ENCODE measurements at regions of chr5 and their contacts with region 1.

Region 1: GRCh38 chr5:173234129-173234790 is 746 bp downstream of the NKX2-5 start:
- DNase-seq: no peak
- ATAC-seq: peak; percentile 3; the same call in 1 of the 2 replicates
- H3K4me3 Mint-ChIP-seq: peak overlapping the region; percentile 56
- H3K27ac Mint-ChIP-seq: no peak overlapping the region
- H3K4me1 Mint-ChIP-seq: peaks cover 60% of the 10 kb centered on the region
- H3K27me3 Mint-ChIP-seq: peaks cover 100% of the 10 kb centered on the region
- CTCF ChIP-seq: no peak

Region 2: GRCh38 chr5:173051746-173052145 is 182.5 kb before region 1 on chr5:
- CTCF ChIA-PET with region 1: no interaction called
- POLR2A ChIA-PET with region 1: no interaction called
- DNase-seq: no peak
- ATAC-seq: no peak
- H3K4me3 Mint-ChIP-seq: no peak overlapping the region
- H3K27ac Mint-ChIP-seq: no peak overlapping the region
- H3K4me1 Mint-ChIP-seq: peaks cover 14% of the 10 kb centered on the region
- H3K27me3 Mint-ChIP-seq: peaks cover 9% of the 10 kb centered on the region
- CTCF ChIP-seq: no peak

Region 3: DNA sequence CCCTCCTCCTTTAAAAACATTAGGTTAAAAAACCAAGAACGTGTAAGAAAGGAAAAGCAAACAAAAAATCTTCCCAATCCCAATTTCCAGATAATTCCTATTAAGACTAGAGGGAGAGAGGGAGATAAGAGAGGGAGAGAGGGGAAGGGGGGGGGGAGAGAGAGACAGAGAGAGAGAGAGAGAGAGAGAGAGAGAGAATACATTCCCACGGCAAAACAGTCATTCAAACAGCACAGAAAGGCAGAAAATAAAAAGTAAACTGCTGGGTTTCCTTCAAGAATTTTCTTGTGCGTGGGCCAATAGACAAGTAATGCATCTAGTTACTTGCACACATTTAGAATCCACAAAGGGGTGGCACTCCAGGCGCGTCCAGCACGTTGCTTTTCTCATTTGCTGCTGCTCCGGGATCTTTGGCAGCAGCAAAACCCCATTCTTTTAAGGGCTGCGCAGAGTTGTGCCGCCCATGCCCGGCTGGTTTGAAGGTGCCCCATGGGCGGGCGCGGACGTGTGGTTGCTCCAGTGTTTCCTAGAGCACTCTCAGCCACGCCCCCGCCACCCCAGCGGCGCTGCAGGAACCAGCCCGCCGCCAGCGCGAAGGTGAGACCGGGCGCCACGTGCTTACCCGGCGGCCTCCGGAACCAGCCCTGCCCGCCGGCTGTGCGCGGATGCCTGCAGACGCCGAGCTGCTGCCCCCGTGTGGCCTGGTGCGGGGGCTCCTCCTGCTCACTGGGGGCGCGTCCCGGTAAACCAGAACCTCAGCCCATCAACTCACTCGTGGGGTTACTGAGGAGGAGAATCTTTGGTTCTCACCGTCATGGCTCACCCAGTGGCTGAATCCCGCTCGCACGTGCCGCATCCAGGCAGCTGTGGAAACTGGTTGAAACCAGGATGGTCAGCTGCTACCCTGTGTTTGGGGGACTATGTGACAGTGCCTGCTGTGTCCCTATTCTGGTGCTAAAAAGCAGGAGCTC is 49.3 kb after region 1 on chr5:
- CTCF ChIA-PET with region 1: interaction called, 14 read pairs
- POLR2A ChIA-PET with region 1: no interaction called
- DNase-seq: peak; percentile 87
- ATAC-seq: peak; percentile 88
- H3K4me3 Mint-ChIP-seq: peak overlapping the region; percentile 23; the same call in 1 of the 2 replicates
- H3K27ac Mint-ChIP-seq: no peak overlapping the region
- H3K4me1 Mint-ChIP-seq: peaks cover 10% of the 10 kb centered on the region
- H3K27me3 Mint-ChIP-seq: peaks cover 61% of the 10 kb centered on the region
- CTCF ChIP-seq: peak; percentile 58

Region 4: DNA sequence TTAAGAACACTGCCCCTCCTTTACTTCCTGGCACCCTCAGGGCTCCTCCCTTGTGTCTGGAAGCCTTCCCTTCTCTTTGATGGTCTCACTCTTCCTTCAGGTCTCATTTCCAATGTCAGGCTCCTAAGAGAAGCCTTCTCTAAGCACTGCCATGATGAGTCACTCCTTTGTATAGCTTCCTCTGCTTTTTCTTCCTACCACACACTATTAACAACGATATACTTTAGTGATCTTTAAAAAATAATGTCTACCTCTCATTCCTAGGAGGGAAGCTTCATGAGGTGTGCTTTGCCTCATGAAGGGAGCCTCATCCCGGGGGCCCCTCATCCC is 302.0 kb after region 1 on chr5:
- CTCF ChIA-PET with region 1: no interaction called
- POLR2A ChIA-PET with region 1: no interaction called
- DNase-seq: no peak
- ATAC-seq: no peak
- H3K4me3 Mint-ChIP-seq: no peak overlapping the region
- H3K27ac Mint-ChIP-seq: no peak overlapping the region
- H3K4me1 Mint-ChIP-seq: no peaks in the 10 kb centered on the region
- H3K27me3 Mint-ChIP-seq: peaks cover 13% of the 10 kb centered on the region
- CTCF ChIP-seq: no peak